CD4-positive, alpha-beta T cell (primary cell): ENCODE measurements at regions of chr7 and their contacts with region 1.

Region 1: GRCh38 chr7:50369143-50370026 is 64.9 kb downstream of the IKZF1 start:
- DNase-seq: peak in 7 of 14 experiments; percentile 45 to 91 (median 65)
- ATAC-seq: peak; percentile 58
- H3K4me3 ChIP-seq: no peak overlapping the region
- H3K4me3 Mint-ChIP-seq: peak overlapping the region; percentile 71
- H3K27ac ChIP-seq: peak overlapping the region; percentile 68 to 73
- H3K27ac Mint-ChIP-seq: no peak overlapping the region
- H3K4me1 ChIP-seq: peaks cover 80% of the 10 kb centered on the region
- H3K4me1 Mint-ChIP-seq: peaks cover 97% of the 10 kb centered on the region
- H3K27me3 ChIP-seq: no peaks in the 10 kb centered on the region
- H3K27me3 Mint-ChIP-seq: no peaks in the 10 kb centered on the region
- CTCF ChIP-seq: peak; percentile 88

Region 2: DNA sequence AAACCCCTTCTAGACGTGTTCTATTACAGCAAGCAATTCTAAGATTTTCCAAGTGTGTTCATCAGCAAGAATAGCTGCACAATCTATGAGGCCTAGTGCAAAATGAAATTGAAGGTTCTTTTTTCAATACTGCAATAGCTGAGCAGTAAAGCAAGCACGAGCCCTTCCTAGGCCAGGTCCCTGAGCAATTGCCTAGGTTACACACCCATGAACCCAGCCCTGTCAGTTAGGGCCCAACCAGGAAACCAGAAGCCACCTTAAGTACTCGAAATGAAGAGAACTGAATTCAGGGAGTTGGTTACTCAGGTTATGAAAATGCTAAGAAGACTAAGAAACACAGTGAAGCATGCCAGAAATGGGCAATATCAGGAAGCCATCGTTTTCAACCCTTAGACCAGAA is 647.9 kb before region 1 on chr7:
- CTCF ChIA-PET with region 1: no interaction called
- POLR2A ChIA-PET with region 1: no interaction called
- intact Hi-C with region 1: no loop called
- DNase-seq: no peak
- ATAC-seq: no peak
- H3K4me3 ChIP-seq: no peak overlapping the region
- H3K4me3 Mint-ChIP-seq: no peak overlapping the region
- H3K27ac ChIP-seq: no peak overlapping the region
- H3K27ac Mint-ChIP-seq: no peak overlapping the region
- H3K4me1 ChIP-seq: no peaks in the 10 kb centered on the region
- H3K4me1 Mint-ChIP-seq: no peaks in the 10 kb centered on the region
- H3K27me3 ChIP-seq: no peaks in the 10 kb centered on the region
- H3K27me3 Mint-ChIP-seq: no peaks in the 10 kb centered on the region
- CTCF ChIP-seq: no peak

Region 3: GRCh38 chr7:50147951-50148808 is 221.2 kb before region 1 on chr7:
- CTCF ChIA-PET with region 1: interaction called, 3 read pairs
- POLR2A ChIA-PET with region 1: interaction called, 11 read pairs
- intact Hi-C with region 1: no loop called
- DNase-seq: peak in 6 of 14 experiments; percentile 19 to 85 (median 54)
- ATAC-seq: peak; percentile 86
- H3K4me3 ChIP-seq: no peak overlapping the region
- H3K4me3 Mint-ChIP-seq: peak overlapping the region; percentile 14
- H3K27ac ChIP-seq: peak overlapping the region; percentile 23 to 45
- H3K27ac Mint-ChIP-seq: peak overlapping the region; percentile 81
- H3K4me1 ChIP-seq: peaks cover 36% of the 10 kb centered on the region
- H3K4me1 Mint-ChIP-seq: peaks cover 67% of the 10 kb centered on the region
- H3K27me3 ChIP-seq: no peaks in the 10 kb centered on the region
- H3K27me3 Mint-ChIP-seq: no peaks in the 10 kb centered on the region
- CTCF ChIP-seq: no peak

Region 4: GRCh38 chr7:50335795-50336754 is 33.3 kb before region 1 on chr7:
- CTCF ChIA-PET with region 1: interaction called, 6 read pairs
- POLR2A ChIA-PET with region 1: interaction called, 2,111 read pairs
- intact Hi-C with region 1: loop called in 1 of 2 experiments (anchors 5 kb)
- DNase-seq: peak in 13 of 14 experiments; percentile 73 to 91 (median 85)
- ATAC-seq: peak; percentile 50
- H3K4me3 ChIP-seq: peak overlapping the region; percentile 24
- H3K4me3 Mint-ChIP-seq: no peak overlapping the region
- H3K27ac ChIP-seq: peak overlapping the region; percentile 87 to 91
- H3K27ac Mint-ChIP-seq: no peak overlapping the region
- H3K4me1 ChIP-seq: peaks cover 94% of the 10 kb centered on the region
- H3K4me1 Mint-ChIP-seq: peaks cover 14% of the 10 kb centered on the region
- H3K27me3 ChIP-seq: no peaks in the 10 kb centered on the region
- H3K27me3 Mint-ChIP-seq: no peaks in the 10 kb centered on the region
- CTCF ChIP-seq: no peak

Region 5: GRCh38 chr7:50397320-50397970 is 28.1 kb after region 1 on chr7:
- CTCF ChIA-PET with region 1: interaction called, 8 read pairs
- POLR2A ChIA-PET with region 1: interaction called, 13 read pairs
- intact Hi-C with region 1: no loop called
- DNase-seq: peak in 3 of 14 experiments; percentile 65 to 79 (median 79)
- ATAC-seq: peak; percentile 35
- H3K4me3 ChIP-seq: no peak overlapping the region
- H3K4me3 Mint-ChIP-seq: no peak overlapping the region
- H3K27ac ChIP-seq: peak overlapping the region; percentile 69 to 81
- H3K27ac Mint-ChIP-seq: peak overlapping the region; percentile 94
- H3K4me1 ChIP-seq: peaks cover 52% of the 10 kb centered on the region
- H3K4me1 Mint-ChIP-seq: peaks cover 82% of the 10 kb centered on the region
- H3K27me3 ChIP-seq: no peaks in the 10 kb centered on the region
- H3K27me3 Mint-ChIP-seq: no peaks in the 10 kb centered on the region
- CTCF ChIP-seq: no peak